Endothelial cell of umbilical vein (primary cell): ENCODE measurements at regions of chrX and their contacts with region 1.

Region 1: GRCh38 chrX:13506574-13506973 is 62.8 kb upstream of the EGFL6 start:
- DNase-seq: peak; percentile 34
- H3K4me3 ChIP-seq: no peak overlapping the region
- H3K27ac ChIP-seq: no peak overlapping the region
- H3K4me1 ChIP-seq: no peaks in the 10 kb centered on the region
- H3K27me3 ChIP-seq: no peaks in the 10 kb centered on the region
- CTCF ChIP-seq: peak; percentile 37 to 41
- POLR2A ChIP-seq: no peak

Region 2: DNA sequence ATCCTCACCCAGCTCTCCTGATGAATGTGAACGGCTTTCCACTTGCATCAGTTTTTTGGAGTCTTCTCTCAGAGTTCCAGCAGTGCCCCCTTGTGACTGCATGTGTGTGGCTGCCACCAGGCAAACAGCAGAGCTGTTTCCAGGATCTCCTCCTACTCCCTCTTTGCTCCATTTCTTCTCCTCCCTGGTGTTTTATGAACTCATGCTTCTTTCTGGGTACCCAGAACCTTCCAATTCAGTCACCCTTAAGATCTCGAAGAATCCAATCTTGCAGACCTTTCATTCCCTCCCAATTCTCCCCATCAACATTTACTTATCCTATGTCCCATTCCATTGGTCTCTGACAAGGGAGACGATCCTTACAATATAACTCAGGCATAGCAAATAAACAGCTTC is 139.6 kb after region 1 on chrX:
- CTCF ChIA-PET with region 1: interaction called, 87 read pairs
- POLR2A ChIA-PET with region 1: no interaction called
- dilution Hi-C with region 1: no loop called
- intact Hi-C with region 1: loop called (anchors 1 kb)
- DNase-seq: peak; percentile 42
- H3K4me3 ChIP-seq: no peak overlapping the region
- H3K27ac ChIP-seq: no peak overlapping the region
- H3K4me1 ChIP-seq: peaks cover 3% of the 10 kb centered on the region
- H3K27me3 ChIP-seq: no peaks in the 10 kb centered on the region
- CTCF ChIP-seq: peak; percentile 46 to 59
- POLR2A ChIP-seq: no peak

Region 3: DNA sequence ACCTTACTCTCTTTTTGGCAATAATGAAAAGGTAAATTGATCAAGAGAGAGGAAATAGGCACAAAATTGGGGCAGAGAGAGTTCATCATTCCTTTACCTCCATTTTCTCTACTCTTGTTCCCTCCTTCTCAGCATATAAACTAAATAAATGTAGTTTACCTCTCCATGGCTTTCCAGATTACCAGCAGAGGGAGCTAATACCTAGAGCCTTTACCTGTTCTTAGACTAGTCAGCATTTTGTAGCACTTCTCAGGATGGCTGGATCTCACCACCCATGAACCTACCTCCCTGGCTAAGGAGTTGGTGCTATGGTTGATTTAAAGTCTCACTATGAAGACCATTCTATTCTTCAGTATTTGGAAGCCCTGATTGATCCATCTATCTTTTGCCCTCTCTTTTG is 243.6 kb after region 1 on chrX:
- CTCF ChIA-PET with region 1: interaction called, 14 read pairs
- POLR2A ChIA-PET with region 1: no interaction called
- dilution Hi-C with region 1: no loop called
- intact Hi-C with region 1: loop called (anchors 1 kb)
- DNase-seq: peak; percentile 35
- H3K4me3 ChIP-seq: no peak overlapping the region
- H3K27ac ChIP-seq: no peak overlapping the region
- H3K4me1 ChIP-seq: no peaks in the 10 kb centered on the region
- H3K27me3 ChIP-seq: no peaks in the 10 kb centered on the region
- CTCF ChIP-seq: peak; percentile 22 to 31
- POLR2A ChIP-seq: no peak